Calu3 (cell line): ENCODE measurements at regions of chr1 and their contacts with region 1.

Region 1: GRCh38 chr1:152745289-152745704 is 12.5 kb upstream of the KPRP start:
- DNase-seq: peak; percentile 21
- H3K4me3 Mint-ChIP-seq: no peak overlapping the region
- H3K27ac Mint-ChIP-seq: no peak overlapping the region
- H3K4me1 Mint-ChIP-seq: peaks cover 10% of the 10 kb centered on the region
- H3K27me3 Mint-ChIP-seq: peaks cover 55% of the 10 kb centered on the region
- CTCF ChIP-seq: no peak

Region 2: DNA sequence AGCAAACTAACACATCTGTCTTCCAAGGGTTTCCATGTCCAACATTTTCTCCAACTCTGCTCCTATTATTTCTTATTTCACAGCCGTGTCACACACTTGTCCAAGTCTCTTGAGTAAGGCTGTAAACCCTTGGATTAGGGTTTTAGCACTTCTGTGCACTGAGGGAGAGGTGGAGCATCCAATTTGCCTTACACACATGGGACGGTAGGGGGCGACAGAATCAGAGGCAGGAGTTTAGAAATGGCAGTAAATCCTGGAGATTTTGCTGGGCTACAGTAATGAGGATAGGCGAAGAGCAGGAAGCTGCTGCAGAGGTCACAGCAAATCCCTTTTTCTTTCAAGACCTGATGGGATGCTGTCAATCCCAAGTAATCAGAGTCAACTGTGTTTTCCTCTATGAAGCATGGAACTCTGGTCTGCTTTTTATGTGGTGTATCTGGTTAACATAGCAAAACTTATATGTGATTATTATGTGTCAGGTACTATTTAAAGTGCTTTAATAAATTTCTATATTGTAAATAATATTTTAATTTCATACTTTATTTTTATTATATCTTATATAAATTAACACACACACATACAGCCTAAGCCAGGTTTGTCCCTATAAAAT is 250.1 kb before region 1 on chr1:
- CTCF ChIA-PET with region 1: no interaction called
- intact Hi-C with region 1: loop called (anchors 10 kb)
- DNase-seq: peak; percentile 74
- H3K4me3 Mint-ChIP-seq: no peak overlapping the region
- H3K27ac Mint-ChIP-seq: no peak overlapping the region
- H3K4me1 Mint-ChIP-seq: no peaks in the 10 kb centered on the region
- H3K27me3 Mint-ChIP-seq: peaks cover 12% of the 10 kb centered on the region
- CTCF ChIP-seq: peak; percentile 64

Region 3: GRCh38 chr1:152533327-152533938 is 211.9 kb before region 1 on chr1:
- CTCF ChIA-PET with region 1: no interaction called
- intact Hi-C with region 1: no loop called
- DNase-seq: peak; percentile 80
- H3K4me3 Mint-ChIP-seq: no peak overlapping the region
- H3K27ac Mint-ChIP-seq: no peak overlapping the region
- H3K4me1 Mint-ChIP-seq: no peaks in the 10 kb centered on the region
- H3K27me3 Mint-ChIP-seq: peaks cover 64% of the 10 kb centered on the region
- CTCF ChIP-seq: peak; percentile 76

Region 4: DNA sequence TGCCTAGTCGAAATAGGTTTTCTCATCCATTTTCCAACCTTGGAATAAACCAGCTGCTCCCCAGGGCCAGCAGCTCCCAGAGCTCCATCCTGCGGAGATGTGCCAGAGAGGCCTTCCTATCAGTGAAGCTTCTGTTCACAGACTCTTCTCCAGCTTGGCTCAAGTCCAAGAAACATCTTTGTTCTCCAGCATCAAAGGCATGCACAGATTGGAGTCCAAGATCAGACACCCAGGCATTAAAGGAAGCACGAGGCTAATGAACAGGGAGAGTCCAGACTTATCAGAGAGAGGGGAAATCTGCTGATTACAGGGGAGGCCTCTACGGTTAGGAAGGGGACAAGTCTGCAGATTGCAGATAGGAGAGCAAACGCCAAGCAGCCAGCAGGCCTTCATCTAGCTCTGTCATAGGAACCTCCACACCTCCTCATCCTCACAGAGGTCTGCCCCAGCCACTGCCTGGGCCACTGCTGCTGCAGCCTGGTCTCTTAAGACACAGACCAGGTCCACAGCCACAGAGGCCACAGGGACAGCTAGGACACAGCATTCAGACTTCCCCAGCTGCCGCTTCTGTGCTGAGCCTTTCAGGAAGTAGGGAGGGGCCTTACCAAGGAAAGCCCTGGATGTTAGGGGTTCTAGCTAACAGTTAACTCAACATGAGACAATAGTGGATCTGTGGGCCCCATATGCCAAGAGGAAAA is 475.5 kb after region 1 on chr1:
- CTCF ChIA-PET with region 1: no interaction called
- intact Hi-C with region 1: loop called (anchors 10 kb)
- DNase-seq: no peak
- H3K4me3 Mint-ChIP-seq: no peak overlapping the region
- H3K27ac Mint-ChIP-seq: no peak overlapping the region
- H3K4me1 Mint-ChIP-seq: peaks cover 11% of the 10 kb centered on the region
- H3K27me3 Mint-ChIP-seq: peaks cover 89% of the 10 kb centered on the region
- CTCF ChIP-seq: no peak